Cardiac septum (tissue), 1 donor: ENCODE measurements at regions of chr7 and their contacts with region 1.

Region 1: DNA sequence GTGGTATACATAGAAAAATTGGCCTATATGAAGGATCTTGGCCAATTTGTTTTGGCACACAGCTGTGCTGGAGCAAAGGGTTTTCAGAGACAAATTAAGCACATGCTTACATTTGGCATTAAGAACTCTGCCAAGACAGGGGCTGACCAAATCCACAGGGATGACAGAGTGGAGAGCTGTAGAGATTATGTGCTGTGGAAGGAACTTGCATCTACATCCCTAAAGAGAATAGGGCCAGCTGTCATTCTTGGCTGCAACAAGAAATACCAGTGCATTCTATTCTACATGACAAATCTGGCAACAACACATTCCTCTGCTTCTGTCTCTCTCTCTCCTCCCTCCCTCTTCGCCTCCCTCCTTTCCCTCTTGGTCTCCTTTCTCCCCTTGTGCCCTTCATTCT is 75.6 kb downstream of the POM121L12 start:
- DNase-seq: no peak

Region 2: DNA sequence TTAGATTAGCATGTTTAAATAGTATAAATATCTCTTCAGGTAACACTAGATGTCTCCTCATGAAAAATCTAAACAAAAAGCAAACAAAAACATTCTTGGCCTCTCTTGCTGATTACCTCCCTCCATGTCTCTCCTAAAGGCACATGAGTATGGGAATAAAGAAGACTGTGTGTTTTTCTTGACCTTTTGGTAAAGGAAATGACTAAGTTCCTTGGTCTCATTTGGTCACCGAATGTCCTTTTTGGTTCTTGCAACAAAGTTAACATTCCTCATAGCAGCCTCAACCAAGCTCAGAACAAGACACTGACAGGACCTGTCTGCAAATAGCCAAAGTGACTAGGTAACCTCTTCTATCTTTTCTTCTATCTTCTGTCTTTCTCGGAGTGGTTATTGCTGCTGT is 40.1 kb before region 1 on chr7:
- intact Hi-C with region 1: no loop called
- DNase-seq: no peak

Region 3: GRCh38 chr7:53209129-53209528 is 98.1 kb after region 1 on chr7:
- intact Hi-C with region 1: no loop called
- DNase-seq: no peak

Region 4: DNA sequence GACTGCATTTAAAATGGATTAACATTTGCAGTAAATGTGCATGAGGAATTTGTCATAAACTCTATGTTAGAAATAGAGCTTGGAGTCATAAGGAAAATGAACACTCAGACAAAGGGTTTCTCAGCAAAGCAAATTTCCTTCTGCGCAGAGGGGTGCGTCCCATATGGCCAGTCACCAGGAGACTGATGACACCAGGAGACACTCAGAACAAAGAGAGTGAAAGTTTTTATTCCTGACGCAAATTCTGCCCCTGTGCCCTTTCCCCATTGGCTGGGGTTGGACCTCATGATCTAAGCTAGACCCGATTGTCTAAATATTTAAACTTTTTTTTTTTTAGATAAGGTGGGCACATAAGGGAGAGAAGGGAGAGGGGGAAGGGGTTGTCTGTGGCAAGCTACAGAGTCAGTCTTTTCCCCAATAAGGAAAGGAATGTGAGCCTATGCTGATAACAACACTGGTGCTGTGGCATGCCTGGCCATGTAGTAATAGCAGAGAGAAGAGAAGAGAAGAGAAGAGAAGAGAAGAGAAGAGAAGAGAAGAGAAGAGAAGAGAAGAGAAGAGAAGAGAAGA is 126.4 kb after region 1 on chr7:
- intact Hi-C with region 1: loop called (anchors 5 kb)
- DNase-seq: no peak